ENCODE measurements at regions of chr2 and their contacts with region 1.

Region 1: DNA sequence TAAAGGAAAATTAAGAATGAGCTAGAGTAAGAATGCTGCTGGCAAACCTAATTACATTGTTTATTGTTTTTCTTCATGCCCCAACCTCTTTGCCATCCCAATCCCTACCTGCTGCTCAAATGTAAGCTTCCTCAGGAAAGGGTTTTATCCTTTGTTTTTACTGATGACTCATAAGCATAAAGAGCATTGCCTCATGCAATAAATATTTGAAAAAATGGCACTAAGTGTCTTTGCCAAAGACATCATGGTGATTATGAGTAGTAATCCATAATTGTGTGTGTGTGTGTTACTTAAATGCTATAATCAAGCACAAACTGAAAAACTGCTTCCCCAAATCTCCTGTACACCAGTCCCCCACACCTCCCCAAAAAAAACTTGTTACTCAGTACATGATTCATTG is 53.4 kb downstream of the DNER start:
- DNase-seq: no peak
- H3K4me3 ChIP-seq: no peak overlapping the region
- H3K27ac ChIP-seq: no peak overlapping the region
- H3K4me1 ChIP-seq: no peaks in the 10 kb centered on the region
- H3K27me3 ChIP-seq: no peaks in the 10 kb centered on the region
- CTCF ChIP-seq: no peak
- EP300 ChIP-seq: no peak
- POLR2A ChIP-seq: no peak

Region 2: GRCh38 chr2:229612384-229612971 is 48.5 kb before region 1 on chr2:
- in situ Hi-C with region 1: no loop called
- intact Hi-C with region 1: no loop called
- DNase-seq: no peak
- H3K4me3 ChIP-seq: no peak overlapping the region
- H3K27ac ChIP-seq: no peak overlapping the region
- H3K4me1 ChIP-seq: no peaks in the 10 kb centered on the region
- H3K27me3 ChIP-seq: no peaks in the 10 kb centered on the region
- CTCF ChIP-seq: no peak
- EP300 ChIP-seq: no peak
- POLR2A ChIP-seq: no peak

Region 3: GRCh38 chr2:229633556-229633955 is 27.4 kb before region 1 on chr2:
- in situ Hi-C with region 1: no loop called
- intact Hi-C with region 1: loop called (anchors 1 kb)
- DNase-seq: no peak
- H3K4me3 ChIP-seq: no peak overlapping the region
- H3K27ac ChIP-seq: no peak overlapping the region
- H3K4me1 ChIP-seq: no peaks in the 10 kb centered on the region
- H3K27me3 ChIP-seq: peaks cover 5% of the 10 kb centered on the region
- CTCF ChIP-seq: no peak
- EP300 ChIP-seq: no peak
- POLR2A ChIP-seq: no peak